MCF 10A (cell line): ENCODE measurements at regions of chr11 and their contacts with region 1.

Region 1: DNA sequence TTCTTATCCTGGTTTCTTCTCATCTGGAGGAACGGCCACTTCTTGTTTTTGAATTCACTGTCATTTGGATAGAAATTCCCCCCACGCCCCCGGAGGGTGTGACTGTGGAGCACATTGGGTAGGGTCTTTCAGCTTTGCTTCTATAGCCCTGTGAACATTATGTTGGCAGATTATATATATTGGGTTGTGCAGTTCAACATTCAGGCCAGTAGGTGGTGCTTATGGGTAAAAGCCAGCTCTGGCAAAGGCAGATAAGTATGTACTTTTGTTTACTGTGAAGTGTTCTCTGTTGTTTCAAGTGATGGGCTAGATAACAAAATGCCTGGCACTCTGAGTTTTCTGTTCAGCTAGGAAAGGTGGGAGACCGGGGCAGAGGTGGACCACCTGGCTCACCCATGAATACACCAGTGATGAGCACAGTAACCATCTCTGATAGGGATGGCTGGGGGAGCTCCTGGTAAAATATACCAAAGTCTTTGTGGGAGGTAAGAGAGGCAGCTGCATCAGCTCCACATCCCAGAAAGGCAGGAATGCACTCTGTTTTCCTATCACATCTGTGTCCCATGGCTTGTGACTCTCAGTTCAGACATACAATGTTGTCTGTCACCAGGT is 1348.2 kb upstream of the RAG2 start:
- DNase-seq: peak; percentile 47
- H3K4me3 Mint-ChIP-seq: no peak overlapping the region
- H3K27ac Mint-ChIP-seq: no peak overlapping the region
- H3K4me1 Mint-ChIP-seq: peaks cover 5% of the 10 kb centered on the region
- H3K27me3 Mint-ChIP-seq: no peaks in the 10 kb centered on the region
- CTCF ChIP-seq: peak; percentile 82

Region 2: DNA sequence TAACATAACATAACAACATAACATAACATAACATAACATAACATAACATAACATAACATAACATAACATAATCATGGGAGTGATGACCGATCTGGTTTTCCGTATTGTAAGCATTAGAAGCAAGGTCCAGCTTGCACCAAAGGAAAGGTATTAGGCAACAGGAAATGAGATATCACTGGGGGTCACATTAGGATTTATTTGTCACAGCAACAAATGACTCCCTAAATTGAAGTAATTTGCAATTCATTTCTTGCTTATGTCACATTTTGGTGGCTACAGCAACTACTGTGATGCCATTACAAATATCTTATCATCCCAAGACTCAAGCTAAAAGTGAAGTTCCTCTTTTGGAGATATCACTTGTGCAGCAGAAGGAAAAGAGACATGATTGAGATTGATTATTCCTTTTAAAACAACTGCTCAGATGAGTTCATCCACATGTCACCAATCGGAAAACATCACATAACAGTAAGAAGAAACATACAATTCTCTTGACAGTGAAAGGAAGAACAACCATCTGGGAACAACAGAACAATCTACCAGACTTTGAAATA is 17.1 kb before region 1 on chr11:
- CTCF ChIA-PET with region 1: interaction called, 10 read pairs
- POLR2A ChIA-PET with region 1: no interaction called
- intact Hi-C with region 1: no loop called
- DNase-seq: no peak
- H3K4me3 Mint-ChIP-seq: no peak overlapping the region
- H3K27ac Mint-ChIP-seq: no peak overlapping the region
- H3K4me1 Mint-ChIP-seq: no peaks in the 10 kb centered on the region
- H3K27me3 Mint-ChIP-seq: no peaks in the 10 kb centered on the region
- CTCF ChIP-seq: no peak

Region 3: GRCh38 chr11:38791302-38791961 is 845.2 kb after region 1 on chr11:
- CTCF ChIA-PET with region 1: interaction called, 33 read pairs
- POLR2A ChIA-PET with region 1: no interaction called
- intact Hi-C with region 1: loop called (anchors 1 kb)
- DNase-seq: peak; percentile 82
- H3K4me3 Mint-ChIP-seq: no peak overlapping the region
- H3K27ac Mint-ChIP-seq: no peak overlapping the region
- H3K4me1 Mint-ChIP-seq: no peaks in the 10 kb centered on the region
- H3K27me3 Mint-ChIP-seq: no peaks in the 10 kb centered on the region
- CTCF ChIP-seq: peak; percentile 76

Region 4: GRCh38 chr11:39365809-39366436 is 1419.7 kb after region 1 on chr11:
- CTCF ChIA-PET with region 1: interaction called, 7 read pairs
- POLR2A ChIA-PET with region 1: no interaction called
- intact Hi-C with region 1: loop called (anchors 1 kb)
- DNase-seq: peak; percentile 62
- H3K4me3 Mint-ChIP-seq: no peak overlapping the region
- H3K27ac Mint-ChIP-seq: no peak overlapping the region
- H3K4me1 Mint-ChIP-seq: peaks cover 7% of the 10 kb centered on the region
- H3K27me3 Mint-ChIP-seq: no peaks in the 10 kb centered on the region
- CTCF ChIP-seq: peak; percentile 34